Mammary epithelial cell (primary cell): ENCODE measurements at regions of chr20 and their contacts with region 1.

Region 1: DNA sequence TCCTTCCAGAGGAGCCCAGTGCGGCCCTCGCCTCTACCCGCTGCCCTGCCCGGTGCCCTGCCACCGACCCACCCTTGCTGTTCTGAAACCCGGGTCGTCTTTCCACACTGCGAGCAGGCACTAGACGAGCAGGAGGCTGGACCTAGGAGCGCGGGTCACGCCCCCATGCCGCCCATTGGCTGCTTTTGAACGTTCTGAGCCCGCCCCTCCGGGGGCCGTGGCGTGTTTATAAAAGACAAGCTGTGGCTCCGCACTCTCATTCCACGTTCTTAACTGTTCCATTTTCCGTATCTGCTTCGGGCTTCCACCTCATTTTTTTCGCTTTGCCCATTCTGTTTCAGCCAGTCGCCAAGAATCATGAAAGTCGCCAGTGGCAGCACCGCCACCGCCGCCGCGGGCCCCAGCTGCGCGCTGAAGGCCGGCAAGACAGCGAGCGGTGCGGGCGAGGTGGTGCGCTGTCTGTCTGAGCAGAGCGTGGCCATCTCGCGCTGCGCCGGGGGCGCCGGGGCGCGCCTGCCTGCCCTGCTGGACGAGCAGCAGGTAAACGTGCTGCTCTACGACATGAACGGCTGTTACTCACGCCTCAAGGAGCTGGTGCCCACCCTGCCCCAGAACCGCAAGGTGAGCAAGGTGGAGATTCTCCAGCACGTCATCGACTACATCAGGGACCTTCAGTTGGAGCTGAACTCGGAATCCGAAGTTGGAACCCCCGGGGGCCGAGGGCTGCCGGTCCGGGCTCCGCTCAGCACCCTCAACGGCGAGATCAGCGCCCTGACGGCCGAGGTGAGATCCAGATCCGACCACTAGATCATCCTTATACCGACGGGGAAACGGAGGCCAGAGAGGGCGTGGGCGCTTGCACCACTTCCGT is at the start of gene ID1:
- DNase-seq: peak; percentile 91
- H3K4me3 ChIP-seq: peak within 1 kb of the TSS; percentile 75 to 95 (median 92)
- H3K27ac ChIP-seq: peak within 1 kb of the TSS; percentile 85
- H3K4me1 ChIP-seq: peaks cover 52% of the 10 kb centered on the region
- H3K27me3 ChIP-seq: no peaks in the 10 kb centered on the region
- CTCF ChIP-seq: no peak
- total RNA-seq, gene ID1: 66.2 to 86.1 TPM

Region 2: GRCh38 chr20:31560094-31560899 is 45.0 kb before region 1 on chr20:
- CTCF ChIA-PET with region 1: interaction called, 29 read pairs
- dilution Hi-C with region 1: loop called (anchors 5 kb)
- in situ Hi-C with region 1: loop called (anchors 5 kb)
- intact Hi-C with region 1: no loop called
- DNase-seq: peak; percentile 76
- H3K4me3 ChIP-seq: no peak overlapping the region
- H3K27ac ChIP-seq: peak overlapping the region; percentile 93
- H3K4me1 ChIP-seq: peaks cover 51% of the 10 kb centered on the region
- H3K27me3 ChIP-seq: no peaks in the 10 kb centered on the region
- CTCF ChIP-seq: peak; percentile 92 to 99

Region 3: GRCh38 chr20:31572701-31573554 is 32.3 kb before region 1 on chr20:
- CTCF ChIA-PET with region 1: interaction called, 4 read pairs
- dilution Hi-C with region 1: loop called (anchors 5 kb)
- in situ Hi-C with region 1: no loop called
- intact Hi-C with region 1: loop called (anchors 1 kb)
- DNase-seq: peak; percentile 99
- H3K4me3 ChIP-seq: peak overlapping the region; percentile 43 to 51 (median 45)
- H3K27ac ChIP-seq: peak overlapping the region; percentile 84
- H3K4me1 ChIP-seq: peaks cover 45% of the 10 kb centered on the region
- H3K27me3 ChIP-seq: no peaks in the 10 kb centered on the region
- CTCF ChIP-seq: no peak

Region 4: GRCh38 chr20:31593225-31594002 is 11.9 kb before region 1 on chr20:
- CTCF ChIA-PET with region 1: no interaction called
- dilution Hi-C with region 1: no loop called
- in situ Hi-C with region 1: no loop called
- intact Hi-C with region 1: loop called (anchors 1 kb)
- DNase-seq: peak; percentile 100
- H3K4me3 ChIP-seq: no peak overlapping the region
- H3K27ac ChIP-seq: peak overlapping the region; percentile 55
- H3K4me1 ChIP-seq: peaks cover 37% of the 10 kb centered on the region
- H3K27me3 ChIP-seq: no peaks in the 10 kb centered on the region
- CTCF ChIP-seq: peak in 1 of 2 donors; percentile 18

Region 5: DNA sequence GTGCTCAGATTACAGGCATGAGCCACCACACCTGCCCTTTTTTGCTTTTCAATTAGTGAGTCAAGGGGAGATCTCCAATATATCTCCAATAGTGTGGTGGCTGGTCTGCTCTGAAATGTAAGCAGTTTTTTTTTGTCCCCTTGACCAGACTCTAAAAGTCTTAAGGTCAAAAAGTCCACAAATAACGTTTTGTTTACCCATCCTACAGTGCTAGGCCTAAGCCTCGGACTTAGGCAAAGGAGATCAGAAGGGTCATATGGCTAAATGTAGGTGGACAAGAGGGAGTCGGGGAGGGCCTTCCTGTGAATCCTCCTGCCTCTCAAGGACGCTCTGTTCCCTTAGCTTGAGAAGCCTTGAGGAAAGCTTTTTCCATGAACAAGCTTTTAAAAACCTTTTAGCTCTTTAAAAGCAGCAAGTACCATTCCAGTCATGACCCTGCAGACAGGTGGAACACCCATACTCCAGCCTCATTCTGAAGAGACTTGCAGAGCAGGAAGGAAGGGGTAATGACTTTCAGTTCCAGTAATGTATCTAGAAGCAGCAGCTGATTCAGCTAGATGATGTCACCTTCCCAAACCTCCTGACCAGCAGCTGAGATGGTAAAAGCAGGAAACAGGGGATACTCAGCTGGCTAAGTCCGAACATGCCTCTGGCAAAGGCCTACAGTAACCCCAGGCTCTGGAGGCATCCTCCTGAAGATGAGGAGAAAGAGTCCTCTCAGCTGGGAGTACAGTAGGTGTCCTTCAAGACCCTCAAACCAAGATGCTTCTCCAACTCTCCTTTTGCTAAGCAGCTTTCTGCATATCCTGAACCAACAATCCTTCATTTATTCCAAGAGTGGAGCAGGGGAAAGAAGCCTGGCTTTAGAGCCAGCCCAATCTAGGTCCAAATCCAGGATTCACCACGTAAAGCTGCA is 93.8 kb after region 1 on chr20:
- CTCF ChIA-PET with region 1: no interaction called
- dilution Hi-C with region 1: loop called (anchors 5 kb)
- in situ Hi-C with region 1: no loop called
- intact Hi-C with region 1: no loop called
- DNase-seq: peak; percentile 98
- H3K4me3 ChIP-seq: no peak overlapping the region
- H3K27ac ChIP-seq: peak overlapping the region; percentile 82
- H3K4me1 ChIP-seq: peaks cover 48% of the 10 kb centered on the region
- H3K27me3 ChIP-seq: no peaks in the 10 kb centered on the region
- CTCF ChIP-seq: no peak

Region 6: GRCh38 chr20:31869942-31870725 is 264.9 kb after region 1 on chr20 and contains the starts of genes DUSP15 and TTLL9:
- CTCF ChIA-PET with region 1: no interaction called
- dilution Hi-C with region 1: no loop called
- in situ Hi-C with region 1: no loop called
- intact Hi-C with region 1: no loop called
- DNase-seq: no peak
- H3K4me3 ChIP-seq: peak within 1 kb of the TSS; percentile 40 to 47 (median 43)
- H3K27ac ChIP-seq: no peak within 1 kb of the TSS
- H3K4me1 ChIP-seq: peaks cover 9% of the 10 kb centered on the region
- H3K27me3 ChIP-seq: peaks cover 32% of the 10 kb centered on the region
- CTCF ChIP-seq: no peak
- total RNA-seq, gene DUSP15: 0.67 TPM in 1 of 2 donors, not detected in the other
- total RNA-seq, gene TTLL9: 0.17 to 0.21 TPM

Region 7: GRCh38 chr20:32507998-32508774 is 902.9 kb after region 1 on chr20:
- CTCF ChIA-PET with region 1: no interaction called
- dilution Hi-C with region 1: no loop called
- in situ Hi-C with region 1: no loop called
- intact Hi-C with region 1: no loop called
- DNase-seq: no peak
- H3K4me3 ChIP-seq: no peak overlapping the region
- H3K27ac ChIP-seq: no peak overlapping the region
- H3K4me1 ChIP-seq: peaks cover 9% of the 10 kb centered on the region
- H3K27me3 ChIP-seq: no peaks in the 10 kb centered on the region
- CTCF ChIP-seq: no peak